Motor neuron (in vitro differentiated cells): ENCODE measurements at regions of chr3 and their contacts with region 1.

Region 1: GRCh38 chr3:187319699-187320302 is 28.3 kb upstream of the MASP1 start:
- ATAC-seq: peak; percentile 64 to 95 (median 84)
- H3K4me3 ChIP-seq: no peak overlapping the region
- H3K27ac ChIP-seq: no peak overlapping the region
- H3K4me1 ChIP-seq: peaks cover 0 to 5% of the 10 kb centered on the region in 2 donors

Region 2: DNA sequence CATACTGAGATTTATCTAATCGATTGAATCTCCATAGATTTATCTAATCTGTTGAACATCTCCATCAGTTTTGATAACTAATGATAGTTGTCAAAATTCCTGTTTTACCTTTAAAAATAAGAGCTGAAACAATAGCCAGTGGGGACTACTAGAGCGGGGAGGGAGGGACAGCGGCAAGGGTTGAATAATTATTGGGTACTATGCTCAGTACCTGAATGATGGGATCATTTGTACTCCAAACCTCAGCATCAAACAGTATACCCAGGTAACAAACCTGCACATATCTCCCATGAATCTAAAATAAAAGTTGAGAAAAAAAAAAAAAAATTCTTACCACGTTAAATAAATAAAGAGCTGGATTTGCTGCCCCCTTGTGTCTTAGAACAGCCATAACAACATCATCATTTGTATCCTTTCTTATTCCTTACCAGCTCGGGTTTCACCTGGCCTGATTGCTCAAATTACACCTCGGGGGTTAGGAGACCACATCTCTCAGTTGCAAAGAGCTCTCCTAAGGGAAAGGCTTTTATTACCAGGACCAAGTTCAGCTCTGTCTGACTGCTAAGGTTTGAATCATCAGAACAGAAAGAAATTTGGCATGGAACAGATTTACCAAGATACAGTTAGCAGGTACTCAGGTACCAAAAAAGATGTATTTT is 154.8 kb before region 1 on chr3:
- in situ Hi-C with region 1: no loop called
- ATAC-seq: peak in 3 of 8 experiments; percentile 13 to 69 (median 15)
- H3K4me3 ChIP-seq: no peak overlapping the region
- H3K27ac ChIP-seq: no peak overlapping the region
- H3K4me1 ChIP-seq: no peaks in the 10 kb centered on the region

Region 3: GRCh38 chr3:187210545-187211327 is 109.1 kb before region 1 on chr3:
- in situ Hi-C with region 1: loop called in 1 of 9 experiments (anchors 25 kb)
- ATAC-seq: no peak
- H3K4me3 ChIP-seq: no peak overlapping the region
- H3K27ac ChIP-seq: no peak overlapping the region
- H3K4me1 ChIP-seq: no peaks in the 10 kb centered on the region